HEK293T (cell line): ENCODE measurements at regions of chr1 and their contacts with region 1.

Region 1: DNA sequence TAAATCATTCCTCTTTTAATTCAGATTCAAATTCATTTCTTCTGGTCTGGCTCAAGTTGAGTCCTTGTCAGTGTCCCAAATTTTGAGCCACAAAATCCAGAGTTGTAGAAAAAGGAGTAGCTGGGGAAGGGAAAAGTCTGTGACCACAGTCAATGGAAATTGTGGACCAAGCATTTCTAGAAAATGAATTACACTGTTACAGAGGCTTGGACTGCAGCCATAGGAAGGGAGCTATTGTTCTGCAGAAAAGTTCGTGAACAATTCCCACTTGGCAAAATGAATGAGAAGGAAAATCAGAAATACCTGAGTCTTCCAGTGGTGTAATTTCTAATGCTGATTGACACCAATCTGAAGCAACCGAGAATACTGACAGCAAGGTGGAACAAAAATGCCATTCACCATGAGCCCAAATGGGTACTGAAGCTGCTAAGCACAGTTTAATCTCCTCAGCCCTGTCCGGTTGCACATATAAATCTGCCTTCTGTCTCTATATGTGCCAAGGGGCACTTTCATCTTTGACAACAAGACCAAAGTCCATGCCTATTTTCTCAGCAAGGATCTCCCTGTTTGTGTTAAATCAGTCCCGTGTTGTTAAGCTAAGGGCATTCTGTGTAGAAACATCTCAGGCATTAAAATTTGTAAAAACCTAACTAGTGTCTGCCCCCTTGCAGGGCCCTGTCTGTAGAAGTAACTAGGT is 51.3 kb downstream of the TEX35 start:
- DNase-seq: no peak

Region 2: DNA sequence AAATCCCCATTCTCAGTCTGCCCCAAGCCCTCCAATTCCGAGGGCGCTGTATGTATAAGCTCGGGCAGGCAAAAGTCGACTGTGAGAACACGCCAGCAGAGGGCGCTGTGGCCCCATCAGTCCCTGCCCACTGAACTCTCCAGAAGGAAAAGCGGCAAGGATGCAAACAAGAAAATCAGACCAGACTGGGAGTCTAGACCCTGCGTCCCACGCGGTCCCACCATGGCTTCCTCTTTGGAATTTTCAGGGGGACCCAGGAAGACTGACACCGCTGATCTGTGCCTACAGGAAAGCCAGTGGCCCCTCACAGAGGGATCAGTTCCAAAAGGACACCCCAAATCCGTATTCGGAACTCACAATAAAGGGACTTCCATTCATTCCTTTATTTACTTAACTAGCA is 31.8 kb before region 1 on chr1:
- CTCF ChIA-PET with region 1: interaction called, 10 read pairs
- POLR2A ChIA-PET with region 1: no interaction called
- DNase-seq: peak; percentile 93

Region 3: GRCh38 chr1:178575611-178576331 is 11.5 kb after region 1 on chr1:
- CTCF ChIA-PET with region 1: no interaction called
- POLR2A ChIA-PET with region 1: no interaction called
- DNase-seq: peak; percentile 37